Posterior cingulate gyrus (tissue), 11 donors: ENCODE measurements at regions of chr6 and their contacts with region 1.

Region 1: DNA sequence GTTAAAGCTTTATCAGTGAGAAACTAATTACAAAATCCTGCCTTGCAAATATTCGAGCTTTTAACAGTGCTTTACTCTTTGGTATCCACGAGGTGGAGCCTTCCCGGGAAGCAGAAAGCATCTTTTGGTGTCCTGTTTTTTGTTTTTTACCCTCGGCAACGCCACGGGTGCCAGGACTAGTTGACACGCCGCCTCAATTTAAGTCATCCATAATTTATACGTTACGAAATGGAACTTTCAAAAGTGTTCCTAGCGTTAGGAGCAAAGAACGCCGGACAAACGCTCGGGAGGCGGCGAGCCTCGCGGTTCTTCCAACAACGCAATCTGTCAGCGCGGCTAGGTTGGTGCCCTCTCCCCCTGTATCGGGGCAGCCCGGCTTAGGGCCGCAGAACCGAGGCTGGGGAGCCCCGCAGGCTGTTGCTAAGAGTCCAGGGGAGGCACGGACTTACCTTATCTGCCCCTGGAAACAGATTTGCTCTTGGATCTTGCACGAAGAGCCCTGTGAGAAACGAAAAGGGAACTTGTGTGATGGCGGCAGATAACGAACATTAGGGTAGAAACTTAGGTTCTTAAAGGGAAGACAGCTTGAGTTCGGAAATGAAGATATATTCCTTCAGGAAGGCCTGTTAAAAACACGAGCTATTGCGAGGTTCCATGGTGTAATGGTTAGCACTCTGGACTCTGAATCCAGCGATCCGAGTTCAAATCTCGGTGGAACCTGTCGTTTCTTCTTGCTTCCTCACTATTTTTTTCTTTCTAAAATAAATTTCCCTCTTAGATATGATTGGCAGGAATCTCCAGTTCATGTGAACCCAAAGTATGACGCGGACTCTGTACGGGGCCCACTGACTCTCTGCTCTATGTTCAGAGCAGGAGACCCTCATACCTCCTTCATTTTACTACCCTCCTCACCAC is 46.2 kb upstream of the ZNF184 start:
- DNase-seq: peak in 9 of 10 donors; percentile 30 to 85 (median 45)

Region 2: DNA sequence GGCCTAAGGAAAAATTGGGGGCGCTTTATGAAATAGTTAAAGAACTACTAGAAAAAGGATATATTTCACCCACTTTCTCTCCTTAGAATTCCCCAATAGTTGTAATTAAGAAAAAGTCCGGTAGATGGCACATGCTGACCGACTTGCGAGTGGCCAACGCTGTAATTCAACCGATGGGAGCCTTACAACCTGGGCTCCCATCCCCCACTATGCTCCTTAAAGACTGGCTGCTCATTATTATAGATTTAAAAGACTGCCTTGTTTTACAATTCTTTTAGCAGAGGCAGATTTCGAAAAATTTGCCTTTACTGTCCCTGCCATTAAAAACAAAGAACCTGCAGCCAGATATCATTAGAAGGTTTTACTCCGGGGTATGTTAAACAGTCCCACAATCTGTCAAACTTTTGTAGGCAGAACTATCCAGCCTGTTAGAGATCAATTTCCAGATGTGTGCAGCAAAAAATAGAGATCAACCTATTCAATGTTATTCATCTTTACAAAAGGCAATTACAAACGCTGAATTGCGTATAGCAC is 330.2 kb before region 1 on chr6:
- intact Hi-C with region 1: loop called (anchors 10 kb)
- DNase-seq: peak in 4 of 10 donors; percentile 23 to 88 (median 34)

Region 3: DNA sequence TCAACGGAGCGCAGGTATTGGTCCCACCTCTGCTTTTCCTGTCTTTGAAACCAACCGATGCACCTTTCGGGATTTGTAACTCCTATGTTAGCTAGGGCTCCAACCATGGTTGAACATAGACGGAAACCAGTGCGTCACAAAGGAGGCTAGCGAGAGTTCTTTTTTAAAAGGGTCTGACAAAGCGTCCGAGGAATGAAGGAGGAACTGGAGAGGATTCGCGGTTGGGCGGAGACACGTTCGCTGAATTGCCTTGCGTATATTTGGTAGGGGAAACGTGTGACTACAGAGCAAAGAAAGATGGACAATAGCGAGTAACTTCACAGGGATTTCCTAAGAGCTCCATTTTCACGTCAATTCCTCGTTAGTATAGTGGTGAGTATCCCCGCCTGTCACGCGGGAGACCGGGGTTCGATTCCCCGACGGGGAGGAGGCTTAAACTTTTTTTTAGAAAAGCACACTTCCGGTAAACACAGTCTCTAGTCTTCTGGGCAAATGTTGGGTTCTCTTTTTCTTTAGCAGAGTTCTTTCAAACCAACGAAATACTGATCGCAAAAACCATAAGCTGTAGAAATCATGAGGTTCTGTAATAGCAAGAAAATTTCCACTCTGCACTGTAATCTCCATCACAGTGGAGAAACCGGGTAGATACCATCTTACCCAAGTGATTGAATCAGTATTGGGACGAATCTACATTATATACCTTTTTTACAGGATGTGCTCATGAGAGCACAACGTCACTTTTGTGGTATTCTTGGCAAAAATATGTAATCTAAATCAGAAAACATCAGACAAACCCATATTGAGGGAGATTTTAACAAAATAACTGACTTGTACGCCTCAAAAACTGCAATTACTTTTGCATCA is 39.6 kb before region 1 on chr6:
- intact Hi-C with region 1: loop called (anchors 5 kb)
- DNase-seq: peak; percentile 33 to 94 (median 74)

Region 4: DNA sequence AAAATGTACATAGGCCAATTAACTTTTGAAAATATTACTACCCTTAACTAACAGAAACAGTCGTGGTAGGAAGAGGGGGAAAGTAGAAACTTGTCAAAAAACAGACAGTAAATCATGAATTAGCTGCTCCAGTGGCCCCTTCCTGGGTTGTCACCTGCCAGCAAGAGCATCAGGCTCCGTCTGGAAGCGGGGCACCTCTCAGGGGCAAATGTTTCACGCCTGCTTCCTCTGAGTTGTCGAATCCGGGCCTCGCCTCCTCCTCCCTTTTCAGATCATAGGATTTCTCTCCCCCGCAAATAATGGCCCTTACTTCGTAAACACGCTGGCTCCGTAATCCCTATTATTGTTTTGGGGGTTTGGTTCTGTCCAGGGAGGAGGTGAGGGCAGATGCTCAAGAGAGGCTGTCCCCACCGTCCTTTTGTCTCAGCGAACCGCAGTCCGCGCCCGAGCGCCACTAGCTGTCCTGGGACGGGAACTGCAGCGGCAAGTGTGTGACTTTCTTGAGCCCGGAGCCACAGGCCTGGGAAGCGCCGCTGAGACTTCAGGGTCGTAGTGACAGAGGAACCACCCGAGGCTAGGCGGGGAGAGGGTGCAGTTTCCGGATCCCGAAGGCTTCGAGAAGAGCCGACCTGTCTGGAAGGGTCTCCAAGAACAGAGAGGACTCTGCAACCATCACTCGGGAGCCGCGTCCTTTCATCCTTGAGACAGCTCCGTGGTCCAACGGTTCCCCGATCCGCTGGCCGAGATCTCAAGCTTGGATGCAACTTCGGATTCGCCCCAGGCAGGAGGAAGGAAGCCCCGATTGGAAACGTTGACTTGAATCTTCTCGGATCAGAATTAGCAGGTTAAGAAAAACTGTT is 168.2 kb after region 1 on chr6:
- intact Hi-C with region 1: loop called (anchors 5 kb)
- DNase-seq: peak; percentile 67 to 97 (median 82)

Region 5: DNA sequence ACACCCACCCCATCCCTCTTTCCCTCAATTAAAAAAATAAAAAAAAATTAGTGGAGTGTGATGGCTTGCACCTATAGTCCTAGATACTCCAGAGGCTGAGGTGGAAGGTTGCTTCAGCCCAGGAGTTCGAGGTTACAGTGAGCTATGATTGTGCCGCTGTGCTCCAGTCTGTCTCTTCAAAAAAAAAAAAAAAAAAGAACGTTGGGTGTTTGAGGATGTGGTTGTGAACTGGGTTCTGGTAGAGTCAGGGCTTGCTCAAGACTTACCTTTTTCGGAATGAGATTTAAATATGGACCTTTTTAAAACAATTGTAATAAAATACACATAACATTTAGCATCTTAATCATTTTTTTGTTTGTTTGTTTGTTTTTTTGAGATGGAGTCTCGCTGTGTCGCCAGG is 181.2 kb after region 1 on chr6:
- intact Hi-C with region 1: no loop called
- DNase-seq: no peak

Region 6: GRCh38 chr6:27753668-27754407 is 234.7 kb after region 1 on chr6:
- intact Hi-C with region 1: loop called (anchors 1 kb)
- DNase-seq: peak; percentile 39 to 95 (median 56)